Upper lobe of right lung (tissue), 1 donor: ENCODE measurements at regions of chr20 and their contacts with region 1.

Region 1: GRCh38 chr20:23340524-23340923 is 10.1 kb upstream of the NXT1 start:
- DNase-seq: no peak
- ATAC-seq: peak; percentile 84
- H3K4me3 ChIP-seq: no peak overlapping the region
- H3K27ac ChIP-seq: no peak overlapping the region
- H3K4me1 ChIP-seq: no peaks in the 10 kb centered on the region
- H3K27me3 ChIP-seq: no peaks in the 10 kb centered on the region
- CTCF ChIP-seq: peak; percentile 69

Region 2: DNA sequence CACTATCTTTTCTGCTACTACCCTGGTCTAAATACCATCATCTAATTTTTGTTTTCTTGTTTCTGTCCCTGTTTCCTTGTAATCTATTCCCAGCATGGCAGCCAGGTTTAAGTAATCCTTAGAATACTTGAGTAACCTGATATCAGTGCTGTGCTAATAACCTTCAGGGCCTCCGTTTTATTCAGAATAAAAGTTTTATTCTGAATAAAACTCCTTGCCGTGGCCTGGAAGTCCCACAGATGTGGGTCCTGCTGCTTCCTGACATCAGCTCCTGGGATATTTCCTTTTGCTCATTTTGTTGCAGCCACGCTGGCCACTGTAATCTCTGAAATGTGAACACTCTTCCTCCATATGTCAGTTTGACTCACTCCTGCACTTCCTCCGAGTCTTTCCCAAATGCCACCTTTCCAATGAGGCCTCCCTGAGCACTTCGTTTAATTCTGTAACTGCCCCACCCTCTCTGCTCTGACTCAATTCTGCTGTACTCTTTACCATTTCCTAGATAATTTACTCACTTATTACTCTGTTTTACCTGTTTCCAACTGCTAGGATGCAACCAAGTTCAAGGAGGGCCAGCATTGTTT is 642.2 kb before region 1 on chr20:
- intact Hi-C with region 1: loop called (anchors 5 kb)
- DNase-seq: no peak
- ATAC-seq: no peak
- H3K4me3 ChIP-seq: no peak overlapping the region
- H3K27ac ChIP-seq: no peak overlapping the region
- H3K4me1 ChIP-seq: no peaks in the 10 kb centered on the region
- H3K27me3 ChIP-seq: no peaks in the 10 kb centered on the region
- CTCF ChIP-seq: no peak